ENCODE measurements at regions of chr4 and their contacts with region 1.

Region 1: DNA sequence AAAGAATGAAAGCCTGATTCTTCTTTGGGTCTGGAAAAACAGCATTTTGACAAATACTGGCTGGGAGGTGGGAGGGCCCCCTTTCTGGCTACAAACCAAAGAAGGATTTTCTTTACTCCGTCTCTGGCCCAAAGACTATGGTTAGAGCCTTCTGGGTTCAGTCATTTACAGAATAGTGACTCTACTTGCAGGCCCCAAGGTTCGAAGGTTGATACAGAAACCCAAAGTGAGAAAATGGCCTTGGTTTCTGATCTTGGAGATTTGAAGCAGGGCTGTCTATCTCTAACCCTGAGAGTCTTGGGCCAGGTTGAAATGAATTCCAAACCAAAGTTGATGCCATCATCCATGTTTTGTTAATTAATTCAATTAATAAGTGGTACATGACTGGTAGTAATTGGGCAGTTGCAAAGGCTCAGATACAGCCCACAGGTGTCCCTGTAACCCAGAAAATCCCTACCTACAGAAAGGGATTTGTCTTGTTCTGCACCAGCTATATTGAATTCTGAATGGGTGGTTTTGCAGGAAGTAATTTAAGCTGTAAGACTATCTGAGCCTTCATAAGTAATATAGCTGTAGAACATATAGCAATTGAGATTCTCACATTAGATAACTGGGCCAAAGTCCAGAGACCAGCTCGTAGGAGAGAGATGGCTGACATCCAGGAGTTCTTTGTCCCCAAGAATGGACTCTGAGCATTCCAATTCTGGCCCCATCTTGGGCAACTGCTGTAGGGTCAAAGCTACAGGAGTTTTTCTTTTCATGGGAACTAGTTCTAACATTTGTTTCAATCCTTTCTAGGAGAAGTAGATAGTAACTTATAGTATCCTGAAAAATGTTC is 34.5 kb downstream of the CHRNA9 start:
- DNase-seq: peak; percentile 85
- H3K4me3 ChIP-seq: no peak overlapping the region
- H3K27ac ChIP-seq: peak overlapping the region; percentile 79
- H3K4me1 ChIP-seq: no peaks in the 10 kb centered on the region
- H3K27me3 ChIP-seq: no peaks in the 10 kb centered on the region
- CTCF ChIP-seq: no peak

Region 2: GRCh38 chr4:40507977-40508376 is 138.3 kb after region 1 on chr4:
- intact Hi-C with region 1: loop called (anchors 5 kb)
- DNase-seq: peak; percentile 76
- H3K4me3 ChIP-seq: no peak overlapping the region
- H3K27ac ChIP-seq: peak overlapping the region; percentile 54
- H3K4me1 ChIP-seq: no peaks in the 10 kb centered on the region
- H3K27me3 ChIP-seq: no peaks in the 10 kb centered on the region
- CTCF ChIP-seq: peak; percentile 11

Region 3: DNA sequence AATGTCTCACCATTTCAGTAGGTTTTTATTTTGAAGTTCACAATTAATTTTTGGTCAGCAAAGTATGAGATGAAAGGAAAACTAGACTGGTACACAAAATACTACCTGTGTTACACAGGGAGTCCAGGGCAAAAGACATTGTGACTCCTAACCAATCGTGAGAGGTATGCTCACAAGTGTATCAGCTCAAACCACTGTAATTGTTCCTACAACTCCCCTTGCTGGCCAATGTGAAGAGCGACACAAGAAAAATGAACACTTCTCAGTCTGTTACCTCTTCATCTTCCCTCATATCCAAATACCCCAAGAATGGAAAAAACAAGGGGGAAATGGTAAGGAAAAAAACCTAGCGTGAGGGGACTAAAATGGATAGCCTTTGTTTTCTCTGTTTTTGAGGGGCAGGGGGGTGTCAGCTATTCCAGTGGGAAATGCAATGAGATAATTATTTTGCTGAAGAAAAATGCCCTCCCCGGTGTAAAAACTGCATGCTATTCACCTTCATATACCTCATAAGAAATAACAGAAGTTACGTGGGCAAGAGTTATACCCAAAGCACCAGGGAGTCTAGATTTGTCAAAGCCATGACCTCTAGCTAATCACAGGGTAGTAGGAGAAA is 349.5 kb after region 1 on chr4:
- intact Hi-C with region 1: loop called (anchors 5 kb)
- DNase-seq: peak; percentile 50
- H3K4me3 ChIP-seq: no peak overlapping the region
- H3K27ac ChIP-seq: peak overlapping the region; percentile 67
- H3K4me1 ChIP-seq: peaks cover 8% of the 10 kb centered on the region
- H3K27me3 ChIP-seq: no peaks in the 10 kb centered on the region
- CTCF ChIP-seq: peak; percentile 29

Measured in colonic mucosa (tissue), 4 donors.